ENCODE measurements at regions of chr14 and their contacts with region 1.

Region 1: GRCh38 chr14:81170104-81170828 is 50.5 kb downstream of the GTF2A1 start:
- DNase-seq: peak; percentile 92 to 99 (median 97)

Region 2: GRCh38 chr14:80954687-80955299 is 215.5 kb before region 1 on chr14:
- intact Hi-C with region 1: loop called (anchors 2 kb)
- DNase-seq: peak; percentile 68 to 95 (median 85)

Region 3: GRCh38 chr14:80996049-80996901 is 174.0 kb before region 1 on chr14:
- intact Hi-C with region 1: loop called (anchors 5 kb)
- DNase-seq: peak in 31 of 42 donors; percentile 13 to 83 (median 53)

Region 4: DNA sequence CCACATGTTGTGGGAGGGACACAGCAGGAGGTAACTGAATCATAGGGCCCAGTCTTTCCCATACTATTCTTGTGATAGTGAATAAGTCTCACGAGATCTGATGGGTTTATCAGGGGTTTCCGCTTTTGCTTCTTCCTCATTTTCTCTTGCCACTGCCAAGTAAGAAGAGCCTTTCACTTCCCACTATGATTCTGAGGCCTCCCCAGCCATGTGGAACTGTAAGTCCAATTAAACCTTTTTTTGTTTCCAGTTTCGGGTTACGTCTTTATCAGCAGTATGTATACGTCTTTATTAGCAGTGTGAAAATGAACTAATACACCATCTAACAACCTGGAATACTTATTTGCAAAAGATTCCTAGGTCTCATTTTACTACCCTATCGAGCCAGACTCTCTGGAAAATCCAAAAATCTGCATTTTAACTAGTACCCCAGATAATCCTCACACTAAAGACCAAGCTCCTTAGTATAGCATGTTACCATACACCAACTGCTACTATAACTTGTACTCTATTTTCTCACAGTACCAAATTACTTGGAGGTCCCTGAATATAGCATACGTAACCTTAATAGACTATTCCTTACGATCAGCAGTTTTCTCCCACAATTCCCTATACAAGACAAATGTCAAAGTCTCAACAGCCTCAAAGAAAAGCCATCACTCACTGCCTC is 39.0 kb after region 1 on chr14:
- intact Hi-C with region 1: loop called (anchors 5 kb)
- DNase-seq: no peak

Measured in head of caudate nucleus (tissue), 42 donors.